ENCODE measurements at regions of chr12 and their contacts with region 1.

Region 1: GRCh38 chr12:117190210-117190781 is at the start of gene FBXO21:
- DNase-seq: peak; percentile 96
- ATAC-seq: peak; percentile 97
- H3K4me3 Mint-ChIP-seq: peak within 1 kb of the TSS; percentile 95
- H3K27ac Mint-ChIP-seq: peak within 1 kb of the TSS; percentile 90
- H3K4me1 Mint-ChIP-seq: peaks cover 27% of the 10 kb centered on the region
- H3K27me3 Mint-ChIP-seq: no peaks in the 10 kb centered on the region
- total RNA-seq, gene FBXO21: 22.8 to 28.2 TPM

Region 2: GRCh38 chr12:116773276-116773731 is 417.0 kb before region 1 on chr12:
- CTCF ChIA-PET with region 1: no interaction called
- POLR2A ChIA-PET with region 1: no interaction called
- intact Hi-C with region 1: no loop called
- DNase-seq: no peak
- ATAC-seq: no peak
- H3K4me3 Mint-ChIP-seq: no peak overlapping the region
- H3K27ac Mint-ChIP-seq: no peak overlapping the region
- H3K4me1 Mint-ChIP-seq: no peaks in the 10 kb centered on the region
- H3K27me3 Mint-ChIP-seq: no peaks in the 10 kb centered on the region

Region 3: DNA sequence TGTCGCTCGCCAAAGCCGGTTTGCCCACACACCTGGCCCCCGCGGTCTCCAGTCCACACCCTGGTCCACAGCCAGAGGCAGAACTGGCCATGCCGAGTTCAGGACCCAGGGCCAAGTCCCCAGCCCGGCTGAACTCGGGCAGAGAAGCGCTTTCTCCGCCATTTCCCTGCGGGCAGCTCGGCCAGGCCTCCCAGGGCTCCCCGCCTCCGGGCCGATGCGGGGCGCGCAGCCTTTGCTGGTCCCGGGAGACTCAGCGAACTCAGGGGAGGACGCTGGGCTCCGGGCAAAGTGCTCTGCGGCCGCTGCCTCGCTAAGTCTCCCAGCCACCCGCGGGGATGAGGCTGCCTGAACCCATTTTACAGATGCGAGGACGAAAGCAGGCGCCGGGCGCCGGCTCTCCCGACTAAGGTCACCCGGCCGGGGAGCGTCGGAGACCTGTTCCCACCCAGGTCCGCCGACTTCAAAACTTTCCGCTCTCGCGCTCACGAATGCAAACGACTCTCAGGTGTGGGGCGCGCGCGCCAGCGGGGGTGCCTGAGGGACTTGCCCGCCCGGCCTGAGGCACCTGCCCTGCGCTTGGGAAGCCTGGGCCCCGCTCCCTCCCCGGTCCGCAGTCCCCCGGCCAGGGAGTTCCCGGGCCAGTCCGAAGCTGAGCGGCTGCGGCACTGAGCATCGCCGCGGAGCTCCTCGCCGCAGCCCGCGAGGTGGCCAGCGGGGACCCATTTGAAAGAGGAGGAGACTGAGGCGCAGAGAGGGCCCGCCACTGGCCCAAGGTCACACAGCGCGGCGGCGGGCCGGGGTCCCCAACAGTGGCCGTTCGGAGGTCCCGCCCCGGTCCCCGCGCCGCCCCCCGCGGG is 91.7 kb before region 1 on chr12:
- CTCF ChIA-PET with region 1: no interaction called
- POLR2A ChIA-PET with region 1: no interaction called
- intact Hi-C with region 1: loop called in 1 of 2 experiments (anchors 1 kb)
- DNase-seq: peak; percentile 63
- ATAC-seq: peak; percentile 25
- H3K4me3 Mint-ChIP-seq: peak overlapping the region; percentile 71
- H3K27ac Mint-ChIP-seq: no peak overlapping the region
- H3K4me1 Mint-ChIP-seq: peaks cover 18% of the 10 kb centered on the region
- H3K27me3 Mint-ChIP-seq: peaks cover 15% of the 10 kb centered on the region

Region 4: DNA sequence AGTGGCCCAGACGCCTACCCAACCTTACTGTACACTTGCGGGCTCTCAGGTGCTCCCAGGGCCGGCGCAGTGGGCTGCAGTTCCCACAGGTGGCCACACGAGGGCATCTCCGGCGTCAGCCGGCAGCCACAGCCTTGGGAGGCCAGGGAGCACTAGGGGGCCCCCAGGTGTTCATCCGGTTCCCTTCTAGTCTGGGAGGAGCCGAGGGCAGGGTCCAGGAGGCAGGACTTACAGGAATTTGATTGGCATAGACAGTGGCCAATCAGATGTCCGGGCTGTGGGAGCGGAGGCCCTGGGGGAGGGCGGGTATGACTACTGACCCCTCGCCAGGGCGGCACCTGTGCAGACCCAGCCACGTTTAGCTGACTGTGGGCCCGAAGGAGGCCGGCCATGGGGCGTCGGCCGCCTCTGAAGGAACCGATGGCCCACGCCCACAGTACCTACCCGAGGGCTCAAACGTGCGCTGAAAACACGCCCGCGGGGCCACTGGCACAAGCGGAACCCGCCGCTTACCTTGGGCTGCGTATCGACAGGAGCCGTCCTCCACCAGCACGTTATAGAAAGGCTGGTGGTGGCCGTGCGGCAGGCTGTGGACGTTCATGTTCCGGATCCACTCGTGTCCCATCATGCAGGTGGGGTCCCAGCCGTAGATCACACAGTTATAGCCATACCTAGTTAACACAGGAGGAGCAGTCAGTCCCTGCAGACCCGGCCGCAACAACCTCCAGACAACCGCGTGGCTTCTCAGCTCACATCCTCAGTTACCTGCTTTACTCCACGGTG is 34.8 kb before region 1 on chr12:
- CTCF ChIA-PET with region 1: interaction called, 3 read pairs
- POLR2A ChIA-PET with region 1: no interaction called
- intact Hi-C with region 1: loop called in 1 of 2 experiments (anchors 1 kb)
- DNase-seq: peak; percentile 90
- ATAC-seq: peak; percentile 91
- H3K4me3 Mint-ChIP-seq: no peak overlapping the region
- H3K27ac Mint-ChIP-seq: no peak overlapping the region
- H3K4me1 Mint-ChIP-seq: peaks cover 27% of the 10 kb centered on the region
- H3K27me3 Mint-ChIP-seq: no peaks in the 10 kb centered on the region

Region 5: DNA sequence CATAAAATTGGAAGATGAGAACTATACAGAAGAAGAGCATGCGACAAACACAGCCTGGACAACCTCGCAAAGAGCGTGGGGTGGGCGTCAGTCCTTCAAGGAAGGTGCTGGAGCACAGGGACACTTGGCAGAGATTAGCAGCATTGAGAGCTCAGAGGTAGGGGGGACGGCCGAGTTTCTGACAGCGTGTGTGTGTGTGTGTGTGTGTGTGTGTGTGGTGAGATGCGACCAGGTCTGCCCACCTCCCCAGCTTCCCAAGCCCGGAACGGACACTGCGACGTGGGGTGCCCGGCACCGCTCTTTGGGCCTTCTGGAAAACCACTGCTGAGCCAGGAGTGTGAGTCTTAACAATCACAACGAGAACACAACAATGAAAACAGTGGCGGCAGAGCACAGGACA is 17.9 kb after region 1 on chr12:
- CTCF ChIA-PET with region 1: no interaction called
- POLR2A ChIA-PET with region 1: no interaction called
- intact Hi-C with region 1: no loop called
- DNase-seq: no peak
- ATAC-seq: no peak
- H3K4me3 Mint-ChIP-seq: no peak overlapping the region
- H3K27ac Mint-ChIP-seq: no peak overlapping the region
- H3K4me1 Mint-ChIP-seq: no peaks in the 10 kb centered on the region
- H3K27me3 Mint-ChIP-seq: peaks cover 17% of the 10 kb centered on the region

Measured in activated CD4-positive, alpha-beta T cell treated with anti-CD3 and anti-CD28 coated beads for 36 hours (primary cell).